Dorsolateral prefrontal cortex (tissue), 120 donors: ENCODE measurements at regions of chr10 and their contacts with region 1.

Region 1: DNA sequence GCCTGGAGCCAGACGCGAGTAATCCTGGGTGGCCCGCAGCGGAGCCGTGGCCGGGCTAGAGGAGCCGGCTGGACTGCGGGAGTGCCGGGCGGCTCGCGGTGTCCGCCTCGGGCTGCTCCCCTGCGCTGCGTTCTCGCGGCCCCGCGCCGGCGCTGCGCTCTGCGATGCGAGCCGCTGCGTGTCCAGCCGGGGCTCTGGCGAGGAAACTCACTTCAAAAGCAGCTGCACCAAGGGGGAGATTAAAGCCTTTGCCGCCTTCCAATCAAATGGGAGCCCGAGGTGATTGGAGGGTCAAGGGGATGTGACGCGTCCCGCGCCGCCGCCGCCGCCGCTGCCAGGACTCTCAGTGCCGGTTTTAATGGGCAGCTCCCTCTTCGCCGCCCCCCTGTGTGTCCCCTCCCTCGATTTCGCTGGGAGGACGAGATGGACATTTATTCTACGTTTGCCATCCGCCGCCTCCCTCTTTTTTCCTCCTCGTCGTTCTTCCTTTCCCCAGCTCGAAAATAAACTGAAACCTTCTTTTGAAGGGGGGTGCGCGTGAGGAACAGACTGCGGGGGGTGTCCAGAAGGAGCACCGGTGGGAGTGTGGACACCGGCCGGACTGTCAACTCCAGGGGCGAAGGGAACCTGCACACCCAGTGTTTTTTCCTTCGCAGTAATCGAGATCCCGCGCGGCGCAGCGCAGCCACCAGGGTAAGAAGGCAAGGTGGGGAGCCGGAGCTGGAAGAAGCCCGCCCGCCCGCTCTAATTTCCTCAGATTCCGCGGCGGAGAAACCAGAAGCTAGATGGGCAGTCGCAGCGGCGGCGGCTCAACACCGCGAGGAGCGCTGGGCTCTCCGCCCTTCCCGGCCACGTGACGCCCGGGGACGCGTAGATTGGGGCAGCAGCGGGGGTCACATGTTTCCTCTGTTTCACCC is at the start of gene ZNF503:
- DNase-seq: peak; percentile 86 to 98 (median 96)
- H3K4me3 ChIP-seq: peak within 1 kb of the TSS; percentile 47 to 93 (median 80)
- H3K27ac ChIP-seq: peak within 1 kb of the TSS; percentile 39 to 99 (median 91)
- H3K27me3 ChIP-seq: peaks cover 0 to 65% (median 38%) of the 10 kb centered on the region in 45 donors
- CTCF ChIP-seq: peak in 29 of 56 donors; percentile 6 to 39 (median 16)
- total RNA-seq, gene ZNF503: 3.5 to 16.7 (median 9.6) TPM

Region 2: DNA sequence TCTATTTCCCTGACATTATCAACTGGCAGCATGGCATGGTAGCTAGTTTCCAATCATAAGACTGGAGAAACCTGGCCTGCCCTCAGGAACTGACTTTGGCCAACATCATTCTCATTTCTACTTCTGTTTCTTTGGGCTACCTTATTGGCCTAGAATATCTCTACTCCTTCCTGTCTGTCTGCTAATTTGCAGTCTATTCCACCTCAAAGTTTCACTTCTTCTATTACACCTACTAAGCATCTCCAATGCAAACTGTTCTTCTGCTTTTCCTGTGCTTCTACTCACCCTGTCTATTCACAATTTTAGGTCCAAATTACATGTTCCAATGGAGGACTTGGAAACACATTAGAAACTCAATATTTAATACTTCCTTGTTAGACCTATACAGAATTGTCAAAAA is 65.8 kb before region 1 on chr10:
- intact Hi-C with region 1: no loop called
- DNase-seq: no peak
- H3K4me3 ChIP-seq: no peak overlapping the region
- H3K27ac ChIP-seq: no peak overlapping the region
- H3K27me3 ChIP-seq: peaks cover 0 to 8% (median 0%) of the 10 kb centered on the region in 45 donors
- CTCF ChIP-seq: no peak

Region 3: DNA sequence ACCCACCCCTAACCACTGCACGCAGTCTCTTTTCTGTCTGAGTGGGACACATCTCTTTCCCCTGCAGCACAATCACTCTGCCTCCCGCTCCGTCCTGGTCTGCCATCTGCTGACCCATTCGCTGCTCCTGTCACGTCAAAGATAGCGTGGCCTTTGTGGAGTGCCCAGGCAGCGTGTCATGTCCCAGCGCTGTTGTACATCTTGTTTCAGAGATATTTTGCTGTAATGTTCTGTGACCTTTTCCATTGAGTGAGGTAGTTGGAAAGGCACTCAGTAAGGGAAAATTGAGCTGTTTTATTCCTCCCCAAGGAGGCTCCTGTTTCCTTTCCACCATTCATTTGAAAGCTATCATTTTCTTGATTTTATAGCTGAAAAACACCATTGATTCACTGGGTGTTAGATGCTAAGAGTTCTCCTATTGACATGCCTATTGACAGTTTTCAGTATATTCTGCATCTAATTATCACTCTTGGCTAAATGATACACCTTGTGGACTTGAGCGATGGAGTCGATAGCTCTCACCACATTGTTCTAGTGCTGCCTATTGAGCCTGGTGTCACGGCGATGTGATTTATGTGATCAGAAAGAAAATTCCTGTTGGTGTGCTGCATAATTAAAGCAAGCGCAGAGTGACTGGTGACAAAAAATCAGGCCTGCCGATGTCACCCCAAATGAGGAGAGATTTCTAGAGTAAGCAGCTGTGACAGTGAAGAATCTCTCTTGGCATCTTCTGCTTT is 402.2 kb after region 1 on chr10:
- intact Hi-C with region 1: loop called in 1 of 2 experiments (anchors 10 kb)
- DNase-seq: peak in 5 of 10 donors; percentile 16 to 59 (median 32)
- H3K4me3 ChIP-seq: no peak overlapping the region
- H3K27ac ChIP-seq: no peak overlapping the region
- H3K27me3 ChIP-seq: peaks cover 0 to 9% (median 0%) of the 10 kb centered on the region in 45 donors
- CTCF ChIP-seq: peak in 27 of 56 donors; percentile 12 to 55 (median 27)

Region 4: GRCh38 chr10:75926763-75927162 is 524.9 kb after region 1 on chr10:
- intact Hi-C with region 1: loop called in 1 of 2 experiments (anchors 5 kb)
- DNase-seq: peak in 2 of 10 donors; percentile 30 to 53
- H3K4me3 ChIP-seq: no peak overlapping the region
- H3K27ac ChIP-seq: no peak overlapping the region
- H3K27me3 ChIP-seq: peaks cover 0 to 25% (median 0%) of the 10 kb centered on the region in 45 donors
- CTCF ChIP-seq: peak in 23 of 56 donors; percentile 29 to 72 (median 53)

Region 5: DNA sequence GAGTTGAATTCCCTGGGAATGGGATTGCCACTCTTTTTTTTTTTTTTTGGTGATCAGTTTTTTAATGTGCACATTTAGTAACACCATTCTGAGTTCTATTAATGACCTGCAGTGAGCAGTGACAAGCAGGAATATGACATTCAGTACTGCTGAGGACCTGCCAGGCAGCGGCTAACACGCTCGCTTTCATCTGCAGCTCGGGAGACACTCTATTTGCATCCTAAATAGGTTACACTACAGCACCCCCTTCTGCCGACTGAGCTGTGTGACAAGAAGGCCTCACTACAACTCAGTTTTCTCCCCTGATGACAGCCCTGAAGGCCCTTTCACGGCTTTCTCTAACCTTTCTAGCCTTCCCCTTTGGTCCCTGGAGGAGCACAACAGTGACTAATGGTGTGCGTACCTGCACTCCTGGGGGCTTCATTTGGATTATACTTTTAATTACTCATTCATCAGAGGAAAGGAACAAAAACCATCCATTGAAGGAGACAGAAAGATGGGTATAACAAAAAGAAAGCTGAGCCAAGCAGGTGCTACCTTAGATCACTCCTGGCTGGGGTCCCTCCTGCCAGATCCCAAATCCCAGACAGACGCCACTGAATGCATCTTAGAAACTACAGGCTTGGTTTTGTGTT is 902.0 kb after region 1 on chr10:
- intact Hi-C with region 1: loop called (anchors 5 to 10 kb)
- DNase-seq: peak in 9 of 10 donors; percentile 49 to 76 (median 65)
- H3K4me3 ChIP-seq: peak overlapping the region in 7 of 59 donors; percentile 5 to 27 (median 12)
- H3K27ac ChIP-seq: peak overlapping the region in 2 of 59 donors; percentile 17 to 26
- H3K27me3 ChIP-seq: peaks cover 0 to 7% (median 0%) of the 10 kb centered on the region in 45 donors
- CTCF ChIP-seq: peak in 55 of 56 donors; percentile 29 to 72 (median 56)

Region 6: DNA sequence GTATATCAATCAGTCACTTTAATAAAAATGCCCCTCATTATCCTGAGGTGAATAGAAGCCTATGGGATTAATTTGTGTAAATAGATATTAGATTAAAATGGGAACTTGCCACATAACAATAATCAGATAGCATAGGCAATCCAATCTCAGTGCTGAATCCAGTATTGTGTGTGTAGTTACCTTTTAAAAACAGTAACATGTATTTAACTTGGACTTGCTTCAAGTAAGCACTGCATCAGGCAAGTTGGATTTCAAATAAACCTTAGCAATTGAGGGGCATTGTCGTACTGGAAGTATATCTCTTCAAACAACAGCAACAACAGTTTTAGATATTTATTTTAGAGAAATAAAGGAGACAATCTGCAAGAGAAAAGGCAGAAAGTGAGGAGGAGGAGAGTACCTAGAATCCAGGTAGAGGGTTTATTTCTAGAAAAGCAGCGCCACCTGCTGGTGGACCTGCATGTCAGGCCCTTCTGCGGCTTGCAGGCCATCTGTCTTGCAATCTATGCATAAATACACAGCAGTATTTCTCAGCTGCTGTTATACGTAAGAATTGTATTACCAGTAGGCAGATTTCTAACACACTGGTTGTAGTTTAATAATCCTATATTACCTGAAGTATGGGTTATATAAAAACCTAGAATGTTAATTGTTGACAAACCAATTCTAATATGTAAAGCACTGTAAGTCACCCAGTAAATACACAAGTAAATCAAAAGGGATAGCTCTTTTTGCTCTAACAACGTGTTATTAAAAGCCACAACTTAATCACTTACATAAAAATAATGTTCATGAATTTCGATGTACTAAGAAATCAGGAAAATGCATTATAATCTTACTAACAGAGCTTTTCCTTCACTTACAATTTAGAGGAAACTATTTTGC is 1583.0 kb after region 1 on chr10:
- intact Hi-C with region 1: loop called in 1 of 2 experiments (anchors 10 kb)
- DNase-seq: peak; percentile 44 to 80 (median 70)
- H3K4me3 ChIP-seq: no peak overlapping the region
- H3K27ac ChIP-seq: peak overlapping the region in 1 of 59 donors; percentile 6
- H3K27me3 ChIP-seq: no peaks in the 10 kb centered on the region
- CTCF ChIP-seq: peak; percentile 87 to 98 (median 93)